AG04450 (cell line): ENCODE measurements at regions of chr18 and their contacts with region 1.

Region 1: DNA sequence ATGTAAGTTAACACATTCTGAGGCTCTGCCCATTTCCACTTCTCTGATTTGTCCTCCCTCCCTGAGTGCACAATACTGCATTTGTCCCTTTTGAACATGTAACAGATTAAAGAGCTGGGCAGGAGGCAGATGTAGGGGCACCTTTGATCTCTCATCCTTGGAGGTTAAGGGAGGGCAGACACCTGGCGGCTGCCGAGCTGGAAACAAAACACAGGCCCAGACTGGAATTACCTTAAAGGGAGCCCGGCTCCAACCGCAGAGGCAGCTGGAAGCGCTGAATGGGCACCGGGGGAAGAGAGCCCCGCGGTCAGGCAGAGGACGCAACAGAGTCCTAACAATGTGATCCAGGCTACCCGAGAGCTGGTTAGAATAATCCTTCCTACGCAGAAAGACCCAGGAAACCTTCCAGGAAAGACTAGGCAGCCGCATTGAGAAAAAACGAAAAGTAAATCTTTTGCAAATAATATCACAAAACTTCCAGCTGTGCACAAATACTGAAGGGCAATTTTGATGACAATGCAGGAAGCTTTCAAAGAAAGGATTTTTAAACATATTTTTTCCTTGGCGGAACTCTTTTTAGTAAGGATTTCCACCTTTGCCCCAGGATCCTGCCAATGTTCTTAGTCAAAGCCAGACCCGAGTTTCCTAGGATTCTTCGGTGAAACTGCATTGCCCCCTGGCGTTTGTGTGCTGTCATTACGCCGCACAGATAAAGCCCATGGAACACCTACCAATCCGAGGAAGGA is 216.0 kb downstream of the TGIF1 start:
- DNase-seq: peak; percentile 82
- H3K4me3 ChIP-seq: no peak overlapping the region
- H3K27ac ChIP-seq: peak overlapping the region; percentile 80
- H3K27me3 ChIP-seq: no peaks in the 10 kb centered on the region
- CTCF ChIP-seq: peak; percentile 97

Region 2: GRCh38 chr18:3281456-3282400 is 384.2 kb before region 1 on chr18:
- CTCF ChIA-PET with region 1: interaction called, 103 read pairs
- POLR2A ChIA-PET with region 1: interaction called, 4 read pairs
- DNase-seq: no peak
- H3K4me3 ChIP-seq: no peak overlapping the region
- H3K27ac ChIP-seq: no peak overlapping the region
- H3K27me3 ChIP-seq: no peaks in the 10 kb centered on the region
- CTCF ChIP-seq: peak; percentile 51

Region 3: GRCh38 chr18:3454365-3455089 is 211.4 kb before region 1 on chr18:
- CTCF ChIA-PET with region 1: interaction called, 69 read pairs
- POLR2A ChIA-PET with region 1: interaction called, 14 read pairs
- DNase-seq: no peak
- H3K4me3 ChIP-seq: peak overlapping the region; percentile 53
- H3K27ac ChIP-seq: peak overlapping the region; percentile 68
- H3K27me3 ChIP-seq: no peaks in the 10 kb centered on the region
- CTCF ChIP-seq: peak; percentile 74

Region 4: GRCh38 chr18:3593904-3594661 is 71.9 kb before region 1 on chr18:
- CTCF ChIA-PET with region 1: interaction called, 74 read pairs
- POLR2A ChIA-PET with region 1: no interaction called
- DNase-seq: peak; percentile 96
- H3K4me3 ChIP-seq: peak overlapping the region; percentile 76
- H3K27ac ChIP-seq: peak overlapping the region; percentile 100
- H3K27me3 ChIP-seq: no peaks in the 10 kb centered on the region
- CTCF ChIP-seq: peak; percentile 89

Region 5: DNA sequence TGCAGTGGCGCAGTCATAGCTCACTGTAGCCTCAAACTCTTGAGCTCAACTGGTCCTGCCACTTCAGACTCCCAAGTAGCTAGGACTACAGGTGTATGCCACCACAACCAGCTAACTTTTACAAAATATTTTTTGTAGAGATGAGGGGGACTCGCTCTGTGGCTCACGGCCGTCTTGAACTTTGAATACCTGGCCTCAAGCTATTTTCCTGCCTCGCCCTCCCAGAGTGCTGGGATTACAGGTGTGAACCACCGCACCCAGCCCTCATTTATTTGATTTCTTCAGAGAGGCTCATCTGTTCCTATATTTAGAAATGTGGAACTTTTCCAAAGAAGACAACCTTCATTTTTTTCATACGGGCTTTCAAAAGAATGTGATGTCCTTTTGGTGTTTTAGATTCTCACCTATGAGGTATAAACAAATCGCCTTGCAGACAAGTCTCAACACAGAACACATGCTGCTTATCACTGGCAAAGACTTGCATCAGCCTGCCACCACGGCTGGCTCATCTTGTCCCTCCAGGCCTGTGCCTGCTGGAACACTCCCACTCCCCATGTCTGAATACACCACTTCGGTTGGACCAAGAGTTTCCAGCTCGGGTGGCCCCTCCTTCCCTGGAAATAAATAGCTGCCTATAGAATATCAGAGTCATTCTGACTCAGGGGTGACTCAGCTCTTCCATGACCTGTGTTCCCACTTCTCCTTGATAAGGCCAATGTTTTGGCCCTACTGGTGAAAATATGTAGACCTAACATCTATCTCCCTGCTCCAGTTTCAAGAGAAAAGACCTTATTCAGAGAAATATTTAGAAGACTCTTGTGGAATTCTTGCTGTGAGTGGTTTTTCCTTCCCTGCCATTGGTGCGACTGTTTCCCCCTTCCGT is 13.3 kb before region 1 on chr18:
- CTCF ChIA-PET with region 1: interaction called, 28 read pairs
- POLR2A ChIA-PET with region 1: interaction called, 9 read pairs
- DNase-seq: peak; percentile 92
- H3K4me3 ChIP-seq: no peak overlapping the region
- H3K27ac ChIP-seq: peak overlapping the region; percentile 96
- H3K27me3 ChIP-seq: no peaks in the 10 kb centered on the region
- CTCF ChIP-seq: peak; percentile 33; the same call in 1 of the 2 replicates

Region 6: GRCh38 chr18:3869848-3870247 is 203.9 kb after region 1 on chr18:
- CTCF ChIA-PET with region 1: interaction called, 29 read pairs
- POLR2A ChIA-PET with region 1: no interaction called
- DNase-seq: peak; percentile 27
- H3K4me3 ChIP-seq: no peak overlapping the region
- H3K27ac ChIP-seq: no peak overlapping the region
- H3K27me3 ChIP-seq: no peaks in the 10 kb centered on the region
- CTCF ChIP-seq: peak; percentile 61